SK-N-SH (cell line): ENCODE measurements at regions of chr1 and their contacts with region 1.

Region 1: GRCh38 chr1:93814059-93814794 is 64.8 kb downstream of the DNTTIP2 start:
- DNase-seq: peak; percentile 61
- H3K4me3 ChIP-seq: no peak overlapping the region; a peak in 1 of 4 replicates
- H3K27ac ChIP-seq: peak overlapping the region; percentile 66 to 95
- H3K4me1 ChIP-seq: peaks cover 38 to 45% of the 10 kb centered on the region in 2 experiments
- H3K27me3 ChIP-seq: no peaks in the 10 kb centered on the region
- CTCF ChIP-seq: peak; percentile 99
- EP300 ChIP-seq: peak in 1 of 2 experiments; percentile 51; a peak in 1 of 4 replicates
- RAD21 ChIP-seq: peak; percentile 100

Region 2: GRCh38 chr1:93490357-93490756 is 323.9 kb before region 1 on chr1:
- CTCF ChIA-PET with region 1: no interaction called
- POLR2A ChIA-PET with region 1: no interaction called
- DNase-seq: no peak
- H3K4me3 ChIP-seq: no peak overlapping the region
- H3K27ac ChIP-seq: no peak overlapping the region
- H3K4me1 ChIP-seq: peaks cover 0 to 4% of the 10 kb centered on the region in 2 experiments; a peak in 1 of 4 replicates
- H3K27me3 ChIP-seq: no peaks in the 10 kb centered on the region
- CTCF ChIP-seq: no peak
- EP300 ChIP-seq: no peak
- RAD21 ChIP-seq: no peak

Region 3: DNA sequence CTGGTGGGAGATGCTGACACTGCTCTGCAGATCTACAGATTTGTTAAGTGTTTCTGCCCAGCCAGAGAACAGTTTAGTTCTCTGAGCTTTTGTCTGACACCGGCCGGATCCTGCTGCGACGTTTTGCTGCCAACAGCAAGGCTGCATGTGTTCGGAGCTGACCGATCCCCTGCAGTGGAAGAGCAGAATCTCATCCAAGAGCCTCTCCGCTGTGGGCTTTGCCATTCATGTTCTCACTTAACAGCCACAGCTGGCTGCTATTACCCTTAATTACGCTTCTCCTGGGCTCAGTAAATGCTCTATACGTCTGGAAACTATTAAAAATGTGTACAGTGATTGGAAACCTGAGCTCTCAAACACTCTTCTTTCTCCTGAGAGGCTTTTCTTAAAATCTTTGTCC is 237.9 kb before region 1 on chr1:
- CTCF ChIA-PET with region 1: interaction called, 16 read pairs
- POLR2A ChIA-PET with region 1: no interaction called
- DNase-seq: peak; percentile 79
- H3K4me3 ChIP-seq: no peak overlapping the region
- H3K27ac ChIP-seq: peak overlapping the region; percentile 60 to 98
- H3K4me1 ChIP-seq: peaks cover 31 to 59% of the 10 kb centered on the region in 2 experiments
- H3K27me3 ChIP-seq: no peaks in the 10 kb centered on the region
- CTCF ChIP-seq: no peak
- EP300 ChIP-seq: peak in 1 of 2 experiments; percentile 57; a peak in 1 of 4 replicates
- RAD21 ChIP-seq: peak; percentile 25; the same call in 1 of the 2 replicates

Region 4: GRCh38 chr1:93672069-93672468 is 142.2 kb before region 1 on chr1:
- CTCF ChIA-PET with region 1: interaction called, 30 read pairs
- POLR2A ChIA-PET with region 1: no interaction called
- DNase-seq: no peak
- H3K4me3 ChIP-seq: no peak overlapping the region
- H3K27ac ChIP-seq: peak overlapping the region; percentile 73 to 81
- H3K4me1 ChIP-seq: peaks cover 62 to 74% of the 10 kb centered on the region in 2 experiments
- H3K27me3 ChIP-seq: no peaks in the 10 kb centered on the region
- CTCF ChIP-seq: no peak
- EP300 ChIP-seq: peak; percentile 17 to 80; a peak in 1 of 4 replicates
- RAD21 ChIP-seq: no peak

Region 5: DNA sequence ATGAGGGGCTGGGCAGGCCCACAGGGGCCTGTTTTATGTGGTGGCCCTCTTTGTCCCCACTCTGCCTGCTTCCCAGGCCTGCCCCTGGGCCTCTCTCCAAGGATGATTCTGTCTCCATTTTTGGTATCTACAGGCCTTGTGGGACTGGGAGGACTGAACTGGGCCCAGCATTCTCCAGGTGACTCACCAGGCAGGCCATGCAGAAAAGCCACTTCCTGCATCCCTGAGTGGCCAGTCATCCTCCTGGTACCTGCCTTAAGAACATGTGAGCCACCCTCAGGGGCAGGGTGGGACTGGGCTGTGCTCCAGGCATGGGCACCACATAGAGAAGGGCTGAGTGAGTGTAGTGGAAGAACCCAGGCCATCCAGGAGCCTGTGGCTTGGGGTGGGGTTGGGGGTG is 112.6 kb before region 1 on chr1:
- CTCF ChIA-PET with region 1: interaction called, 19 read pairs
- POLR2A ChIA-PET with region 1: no interaction called
- DNase-seq: peak; percentile 33
- H3K4me3 ChIP-seq: no peak overlapping the region
- H3K27ac ChIP-seq: peak overlapping the region; percentile 95
- H3K4me1 ChIP-seq: peaks cover 24 to 39% of the 10 kb centered on the region in 2 experiments
- H3K27me3 ChIP-seq: no peaks in the 10 kb centered on the region
- CTCF ChIP-seq: no peak
- EP300 ChIP-seq: peak in 1 of 2 experiments; percentile 99; a peak in 2 of 4 replicates
- RAD21 ChIP-seq: no peak

Region 6: DNA sequence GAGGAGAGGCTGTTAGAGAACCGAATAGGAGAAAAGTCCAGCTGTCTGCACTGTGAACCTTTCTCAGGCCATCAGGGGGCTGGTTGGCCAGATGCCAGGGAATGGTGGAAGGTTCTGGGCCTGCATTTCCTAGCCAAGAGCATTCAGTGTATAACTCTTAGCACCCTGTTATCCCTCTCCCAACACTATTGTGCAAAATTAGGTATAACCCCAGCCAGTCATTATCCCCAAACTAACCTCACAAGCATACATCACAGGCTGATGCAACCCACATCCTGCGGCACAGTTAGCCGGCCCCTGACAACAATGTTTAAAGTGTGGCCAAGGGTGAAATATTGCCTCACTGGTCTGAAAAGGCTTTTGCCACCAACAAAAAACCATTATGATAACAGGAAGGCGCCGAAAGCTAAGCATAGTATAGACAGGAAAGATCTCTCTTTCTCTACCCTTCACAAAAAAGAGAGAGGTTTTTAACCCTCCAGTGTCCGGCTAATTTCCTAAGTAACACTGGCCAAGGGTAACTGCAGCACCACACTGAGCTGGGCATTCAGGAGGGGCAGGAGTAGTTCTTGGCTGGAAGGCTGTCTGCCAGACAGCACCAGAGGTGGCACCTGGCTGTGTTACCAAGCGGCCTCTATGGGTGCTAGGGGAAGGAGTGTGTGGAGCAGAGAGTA is 55.2 kb before region 1 on chr1:
- CTCF ChIA-PET with region 1: interaction called, 16 read pairs
- POLR2A ChIA-PET with region 1: no interaction called
- DNase-seq: peak; percentile 55
- H3K4me3 ChIP-seq: no peak overlapping the region
- H3K27ac ChIP-seq: no peak overlapping the region; a peak in 1 of 4 replicates
- H3K4me1 ChIP-seq: peaks cover 4 to 14% of the 10 kb centered on the region in 2 experiments
- H3K27me3 ChIP-seq: no peaks in the 10 kb centered on the region
- CTCF ChIP-seq: no peak
- EP300 ChIP-seq: no peak
- RAD21 ChIP-seq: no peak

Region 7: DNA sequence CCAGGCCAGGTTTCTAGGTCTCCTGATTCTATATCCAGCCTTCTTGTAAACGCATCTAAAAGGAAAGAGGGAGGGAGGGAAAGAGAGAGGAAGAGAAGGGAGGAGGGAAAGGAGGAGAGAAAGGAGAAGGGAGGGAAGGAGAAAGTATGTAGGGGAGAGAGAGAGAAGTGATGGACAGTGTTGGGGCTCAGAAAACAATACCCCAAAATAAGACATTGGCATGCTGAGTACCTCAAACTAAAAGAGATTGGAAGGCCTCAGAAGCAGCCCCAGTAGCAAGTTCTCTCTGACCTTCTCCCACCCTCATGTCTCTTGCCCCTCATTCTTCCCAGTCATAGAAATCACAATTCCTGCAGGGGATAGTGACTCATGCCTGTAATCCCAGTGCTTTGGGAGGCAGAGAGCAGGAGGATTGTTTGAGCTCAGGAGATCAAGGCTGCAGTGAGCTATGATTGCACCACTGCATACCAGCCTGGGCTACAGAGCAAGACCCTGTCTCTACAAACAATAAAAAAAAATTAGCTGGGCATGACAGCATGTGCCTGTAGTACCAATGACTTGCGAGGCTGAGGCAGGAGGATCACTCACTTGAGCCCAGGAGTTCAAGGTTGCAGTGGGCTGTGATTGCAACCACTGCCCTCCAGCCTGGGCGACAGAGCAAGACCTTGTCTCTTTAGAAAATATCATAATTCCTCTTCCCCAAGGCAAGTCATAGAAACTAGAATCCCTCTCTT is 13.6 kb after region 1 on chr1:
- CTCF ChIA-PET with region 1: interaction called, 69 read pairs
- POLR2A ChIA-PET with region 1: interaction called, 6 read pairs
- DNase-seq: no peak
- H3K4me3 ChIP-seq: no peak overlapping the region
- H3K27ac ChIP-seq: peak overlapping the region; percentile 60 to 96
- H3K4me1 ChIP-seq: peaks cover 7 to 51% of the 10 kb centered on the region in 2 experiments; a peak in 3 of 4 replicates
- H3K27me3 ChIP-seq: no peaks in the 10 kb centered on the region
- CTCF ChIP-seq: no peak
- EP300 ChIP-seq: no peak
- RAD21 ChIP-seq: no peak

Region 8: GRCh38 chr1:94130851-94131595 is 316.8 kb after region 1 on chr1:
- CTCF ChIA-PET with region 1: no interaction called
- POLR2A ChIA-PET with region 1: no interaction called
- DNase-seq: no peak
- H3K4me3 ChIP-seq: no peak overlapping the region
- H3K27ac ChIP-seq: no peak overlapping the region
- H3K4me1 ChIP-seq: no peaks in the 10 kb centered on the region; a peak in 1 of 4 replicates
- H3K27me3 ChIP-seq: no peaks in the 10 kb centered on the region
- CTCF ChIP-seq: no peak
- EP300 ChIP-seq: no peak
- RAD21 ChIP-seq: no peak